ENCODE measurements at regions of chr12 and their contacts with region 1.

Region 1: DNA sequence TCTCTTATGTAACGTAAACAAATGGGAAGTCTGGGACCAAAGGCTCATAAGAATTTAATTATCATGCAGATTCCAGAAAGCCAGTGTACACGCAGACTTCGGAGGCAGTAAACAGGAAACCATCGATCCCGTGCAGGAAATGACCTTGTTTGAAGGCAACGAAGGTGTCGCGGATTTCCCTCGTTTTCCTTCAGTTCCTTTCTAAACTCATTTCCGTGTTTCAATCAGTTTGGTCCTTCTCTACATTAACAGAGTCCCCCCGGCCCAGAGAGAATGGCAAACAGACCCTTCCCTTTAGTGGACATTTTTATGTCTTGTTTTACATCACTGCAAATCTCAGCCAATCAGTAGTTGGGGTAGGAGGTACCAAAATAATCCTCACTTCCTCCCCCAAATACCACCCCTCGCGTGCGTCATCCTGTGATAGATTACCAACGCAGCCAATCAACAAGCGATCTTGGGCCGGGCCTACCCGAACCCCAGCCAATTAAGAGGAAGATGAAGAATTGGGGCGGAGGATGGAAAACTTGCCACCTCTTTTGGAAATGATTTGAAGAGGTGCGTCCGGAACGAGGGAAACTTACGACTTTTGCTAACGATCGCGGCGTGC is 6.1 kb upstream of the FOXJ2 start:
- DNase-seq: peak; percentile 99
- H3K4me3 Mint-ChIP-seq: peak overlapping the region; percentile 94
- H3K27ac Mint-ChIP-seq: peak overlapping the region; percentile 100
- H3K4me1 Mint-ChIP-seq: peaks cover 11% of the 10 kb centered on the region
- H3K27me3 Mint-ChIP-seq: no peaks in the 10 kb centered on the region

Region 2: DNA sequence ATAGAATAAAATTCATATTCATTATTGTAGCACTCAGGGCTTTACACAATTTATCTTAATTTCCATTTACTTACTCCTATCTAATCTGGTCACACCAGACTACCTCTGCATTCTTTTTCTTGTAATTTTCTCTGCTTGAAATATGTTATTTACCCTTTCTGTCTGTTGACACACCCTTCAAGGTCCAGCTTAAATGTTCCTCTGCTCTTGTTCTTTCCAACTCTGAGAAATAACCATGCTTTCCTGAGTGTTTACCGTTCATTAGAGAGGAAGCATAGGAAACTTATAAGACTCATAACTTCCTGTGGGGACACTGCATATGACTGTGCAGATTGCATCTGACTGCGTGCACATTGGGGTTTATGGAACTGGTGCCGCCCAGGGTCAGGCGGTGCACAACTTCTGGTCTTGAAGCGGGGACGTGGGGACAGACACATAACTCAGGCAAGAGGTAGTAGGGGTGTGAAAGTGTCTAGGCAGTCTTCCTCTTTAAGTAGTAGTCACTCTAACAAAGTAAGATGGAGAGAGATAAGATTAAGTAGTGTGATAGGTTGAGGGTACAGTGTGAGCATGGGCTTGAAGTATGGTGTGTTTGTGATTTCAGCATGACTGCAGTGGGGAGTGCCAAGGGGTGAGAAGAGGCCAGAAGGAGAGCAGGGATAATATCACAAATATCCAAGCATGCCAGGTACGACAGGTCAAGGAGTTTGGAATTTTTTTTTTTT is 36.4 kb before region 1 on chr12:
- CTCF ChIA-PET with region 1: interaction called, 3 read pairs
- intact Hi-C with region 1: loop called (anchors 1 kb)
- DNase-seq: peak; percentile 84
- H3K4me3 Mint-ChIP-seq: peak overlapping the region; percentile 41
- H3K27ac Mint-ChIP-seq: peak overlapping the region; percentile 82
- H3K4me1 Mint-ChIP-seq: peaks cover 26% of the 10 kb centered on the region
- H3K27me3 Mint-ChIP-seq: no peaks in the 10 kb centered on the region

Region 3: DNA sequence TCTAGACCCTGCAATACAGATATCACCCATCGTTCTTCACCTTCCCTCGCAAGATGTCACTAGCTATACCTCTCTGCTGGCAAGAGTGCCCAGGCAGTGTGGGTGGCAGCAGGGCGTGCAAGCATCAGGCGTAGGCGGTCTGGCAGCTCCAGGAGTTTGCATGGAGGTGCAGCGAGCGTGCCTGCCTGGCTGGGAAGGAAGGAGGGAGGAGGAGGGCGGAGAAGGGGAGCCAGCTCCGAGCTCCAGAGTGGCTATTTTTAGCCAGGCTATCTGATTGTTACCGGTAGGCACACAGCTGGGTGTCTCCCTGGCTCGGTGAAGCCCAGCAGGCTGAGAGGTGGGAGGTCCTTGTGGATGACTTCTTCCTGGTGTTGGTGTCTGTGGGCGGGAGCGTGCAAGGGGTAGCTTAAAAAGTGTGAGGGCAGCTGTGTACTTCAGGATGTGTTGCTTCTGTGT is 12.3 kb after region 1 on chr12:
- CTCF ChIA-PET with region 1: no interaction called
- intact Hi-C with region 1: no loop called
- DNase-seq: peak; percentile 57
- H3K4me3 Mint-ChIP-seq: peak overlapping the region; percentile 16
- H3K27ac Mint-ChIP-seq: no peak overlapping the region
- H3K4me1 Mint-ChIP-seq: peaks cover 55% of the 10 kb centered on the region
- H3K27me3 Mint-ChIP-seq: no peaks in the 10 kb centered on the region

Region 4: GRCh38 chr12:8065991-8066594 is 39.7 kb after region 1 on chr12 and contains the start of gene C3AR1:
- CTCF ChIA-PET with region 1: no interaction called
- intact Hi-C with region 1: no loop called
- DNase-seq: peak; percentile 44
- H3K4me3 Mint-ChIP-seq: peak within 1 kb of the TSS; percentile 22
- H3K27ac Mint-ChIP-seq: peak within 1 kb of the TSS; percentile 63
- H3K4me1 Mint-ChIP-seq: peaks cover 26% of the 10 kb centered on the region
- H3K27me3 Mint-ChIP-seq: no peaks in the 10 kb centered on the region
- total RNA-seq, gene C3AR1: 0.21 to 0.25 TPM

Region 5: GRCh38 chr12:8108808-8109398 is 82.5 kb after region 1 on chr12:
- CTCF ChIA-PET with region 1: no interaction called
- intact Hi-C with region 1: no loop called
- DNase-seq: peak; percentile 92
- H3K4me3 Mint-ChIP-seq: no peak overlapping the region
- H3K27ac Mint-ChIP-seq: no peak overlapping the region
- H3K4me1 Mint-ChIP-seq: no peaks in the 10 kb centered on the region
- H3K27me3 Mint-ChIP-seq: no peaks in the 10 kb centered on the region